ENCODE measurements at regions of chr3 and their contacts with region 1.

Region 1: GRCh38 chr3:46488735-46489361 is 8.9 kb upstream of the RTP3 start:
- DNase-seq: peak; percentile 95
- ATAC-seq: peak; percentile 99
- H3K4me3 ChIP-seq: no peak overlapping the region
- H3K4me3 Mint-ChIP-seq: peak overlapping the region; percentile 67
- H3K27ac ChIP-seq: no peak overlapping the region
- H3K27ac Mint-ChIP-seq: peak overlapping the region; percentile 74
- H3K4me1 ChIP-seq: peaks cover 9 to 11% of the 10 kb centered on the region in 2 donors
- H3K4me1 Mint-ChIP-seq: peaks cover 9% of the 10 kb centered on the region
- H3K27me3 ChIP-seq: peaks cover 0 to 6% (median 4%) of the 10 kb centered on the region in 4 experiments
- H3K27me3 Mint-ChIP-seq: peaks cover 3% of the 10 kb centered on the region
- CTCF ChIP-seq: peak; percentile 100

Region 2: DNA sequence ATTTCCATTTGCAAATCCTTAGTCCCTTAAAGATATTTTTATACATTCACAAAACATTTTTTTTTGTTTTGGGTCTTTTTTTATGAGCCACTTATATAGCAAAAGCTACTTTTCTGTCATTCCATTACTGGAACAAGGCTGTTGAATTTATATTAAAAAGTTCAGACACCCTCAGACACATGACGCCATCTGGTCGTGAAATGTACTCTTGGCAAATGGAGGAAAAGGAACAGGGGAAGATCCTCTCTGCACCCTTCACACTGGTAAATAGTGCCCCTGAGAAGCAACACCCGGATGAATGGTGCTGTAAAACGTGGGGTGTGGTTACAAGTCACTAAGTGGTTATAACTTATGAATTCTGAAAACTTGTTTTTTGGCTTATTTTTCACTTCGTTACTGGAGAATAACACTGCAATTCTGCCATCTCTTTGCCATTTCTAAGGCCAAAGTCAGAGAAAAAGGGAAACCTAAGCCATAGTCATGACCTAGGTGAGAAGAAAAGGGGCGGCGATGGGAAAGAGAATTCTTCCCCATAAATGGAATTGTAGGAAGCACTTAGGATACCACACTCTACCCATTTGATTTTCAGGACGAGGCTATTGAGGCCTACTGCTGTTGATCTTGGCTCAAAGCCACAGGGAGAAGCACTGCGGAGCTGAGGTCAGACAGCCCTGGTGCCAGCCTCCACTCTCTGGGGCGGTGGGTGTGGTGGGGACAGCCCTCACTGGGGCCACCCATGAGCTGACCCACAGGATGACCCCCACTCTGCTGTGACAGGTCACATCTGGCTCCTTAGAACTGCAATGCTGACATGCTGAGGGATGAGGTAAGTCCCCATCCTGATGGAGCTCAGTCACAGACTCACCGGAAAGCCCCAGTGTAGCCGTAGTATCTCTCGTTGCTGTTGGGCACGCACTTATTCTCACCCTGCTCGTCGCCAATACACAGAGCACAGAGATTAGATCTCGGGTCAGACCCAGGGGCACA is 46.0 kb before region 1 on chr3:
- CTCF ChIA-PET with region 1: interaction called, 4 read pairs
- POLR2A ChIA-PET with region 1: no interaction called
- intact Hi-C with region 1: loop called (anchors 2 kb)
- DNase-seq: peak; percentile 58
- ATAC-seq: no peak
- H3K4me3 ChIP-seq: no peak overlapping the region
- H3K4me3 Mint-ChIP-seq: no peak overlapping the region
- H3K27ac ChIP-seq: no peak overlapping the region
- H3K27ac Mint-ChIP-seq: no peak overlapping the region
- H3K4me1 ChIP-seq: peaks cover 32 to 33% of the 10 kb centered on the region in 2 donors
- H3K4me1 Mint-ChIP-seq: peaks cover 34% of the 10 kb centered on the region
- H3K27me3 ChIP-seq: no peaks in the 10 kb centered on the region
- H3K27me3 Mint-ChIP-seq: peaks cover 4% of the 10 kb centered on the region
- CTCF ChIP-seq: peak; percentile 72

Region 3: GRCh38 chr3:46508850-46509591 is 20.2 kb after region 1 on chr3:
- CTCF ChIA-PET with region 1: interaction called, 13 read pairs
- POLR2A ChIA-PET with region 1: no interaction called
- intact Hi-C with region 1: no loop called
- DNase-seq: no peak
- ATAC-seq: no peak
- H3K4me3 ChIP-seq: no peak overlapping the region
- H3K4me3 Mint-ChIP-seq: no peak overlapping the region
- H3K27ac ChIP-seq: no peak overlapping the region
- H3K27ac Mint-ChIP-seq: no peak overlapping the region
- H3K4me1 ChIP-seq: no peaks in the 10 kb centered on the region
- H3K4me1 Mint-ChIP-seq: peaks cover 12% of the 10 kb centered on the region
- H3K27me3 ChIP-seq: peaks cover 0 to 5% (median 0%) of the 10 kb centered on the region in 4 experiments
- H3K27me3 Mint-ChIP-seq: peaks cover 3% of the 10 kb centered on the region
- CTCF ChIP-seq: no peak

Region 4: GRCh38 chr3:46538803-46539442 is 50.1 kb after region 1 on chr3:
- CTCF ChIA-PET with region 1: interaction called, 156 read pairs
- POLR2A ChIA-PET with region 1: interaction called, 26 read pairs
- intact Hi-C with region 1: loop called (anchors 1 kb)
- DNase-seq: peak; percentile 96
- ATAC-seq: peak; percentile 85
- H3K4me3 ChIP-seq: peak overlapping the region; percentile 6 to 69 (median 39)
- H3K4me3 Mint-ChIP-seq: peak overlapping the region; percentile 80
- H3K27ac ChIP-seq: peak overlapping the region; percentile 89
- H3K27ac Mint-ChIP-seq: peak overlapping the region; percentile 93
- H3K4me1 ChIP-seq: peaks cover 56 to 67% of the 10 kb centered on the region in 2 donors
- H3K4me1 Mint-ChIP-seq: peaks cover 68% of the 10 kb centered on the region
- H3K27me3 ChIP-seq: peaks cover 0 to 13% (median 5%) of the 10 kb centered on the region in 4 experiments
- H3K27me3 Mint-ChIP-seq: peaks cover 23% of the 10 kb centered on the region
- CTCF ChIP-seq: no peak

Region 5: GRCh38 chr3:46558184-46559043 is 69.6 kb after region 1 on chr3:
- CTCF ChIA-PET with region 1: interaction called, 275 read pairs
- POLR2A ChIA-PET with region 1: interaction called, 12 read pairs
- intact Hi-C with region 1: loop called (anchors 1 kb)
- DNase-seq: peak; percentile 88
- ATAC-seq: peak; percentile 99
- H3K4me3 ChIP-seq: peak overlapping the region in 3 of 5 experiments; percentile 27 to 37 (median 37)
- H3K4me3 Mint-ChIP-seq: peak overlapping the region; percentile 74
- H3K27ac ChIP-seq: no peak overlapping the region
- H3K27ac Mint-ChIP-seq: peak overlapping the region; percentile 21
- H3K4me1 ChIP-seq: peaks cover 13% of the 10 kb centered on the region in 2 donors
- H3K4me1 Mint-ChIP-seq: peaks cover 14% of the 10 kb centered on the region
- H3K27me3 ChIP-seq: no peaks in the 10 kb centered on the region
- H3K27me3 Mint-ChIP-seq: peaks cover 6% of the 10 kb centered on the region
- CTCF ChIP-seq: peak; percentile 85

Region 6: GRCh38 chr3:46629551-46630517 is 141.0 kb after region 1 on chr3:
- CTCF ChIA-PET with region 1: interaction called, 253 read pairs
- POLR2A ChIA-PET with region 1: interaction called, 7 read pairs
- intact Hi-C with region 1: loop called (anchors 1 kb)
- DNase-seq: peak; percentile 85
- ATAC-seq: peak; percentile 98
- H3K4me3 ChIP-seq: peak overlapping the region in 4 of 5 experiments; percentile 7 to 47 (median 44)
- H3K4me3 Mint-ChIP-seq: peak overlapping the region; percentile 76
- H3K27ac ChIP-seq: no peak overlapping the region
- H3K27ac Mint-ChIP-seq: peak overlapping the region; percentile 46
- H3K4me1 ChIP-seq: peaks cover 4 to 11% of the 10 kb centered on the region in 2 donors
- H3K4me1 Mint-ChIP-seq: peaks cover 14% of the 10 kb centered on the region
- H3K27me3 ChIP-seq: no peaks in the 10 kb centered on the region
- H3K27me3 Mint-ChIP-seq: no peaks in the 10 kb centered on the region
- CTCF ChIP-seq: peak; percentile 98

Measured in B cell (primary cell).